ENCODE measurements at regions of chr15 and their contacts with region 1.

Region 1: DNA sequence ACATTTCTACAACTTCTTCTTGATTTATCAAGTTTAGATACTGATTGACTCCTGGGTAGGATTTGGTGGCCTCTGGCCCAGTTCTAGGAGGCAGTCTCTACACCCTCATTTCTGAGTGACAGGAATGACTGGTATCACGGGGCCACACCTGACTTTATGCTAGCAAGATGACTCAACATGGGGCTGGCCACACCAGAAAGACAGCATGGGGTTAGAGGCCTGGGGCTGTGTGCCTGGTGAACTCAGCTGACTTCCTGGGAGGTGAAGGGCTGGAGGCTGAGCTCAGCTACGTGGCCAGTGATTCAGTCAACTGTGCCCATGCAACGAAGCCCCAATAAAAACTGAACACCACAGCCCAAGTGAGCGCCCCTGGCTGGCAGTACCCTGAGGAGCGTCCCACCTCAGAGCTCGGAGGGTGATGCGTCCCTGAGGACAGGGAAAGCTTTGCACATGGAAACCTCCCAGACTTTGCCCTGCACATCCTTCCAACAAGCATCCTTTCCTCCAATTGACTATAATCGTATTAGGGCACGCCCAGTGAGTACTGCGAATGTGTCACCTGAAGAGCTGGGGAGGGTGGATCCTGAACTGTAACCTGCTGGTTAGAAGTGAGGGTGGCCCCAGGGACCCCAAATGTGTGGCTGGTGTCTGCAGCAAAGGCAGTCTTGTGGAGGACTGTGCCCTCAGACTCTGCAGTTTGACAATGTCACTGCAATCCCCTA is 57.2 kb downstream of the NIPA2 start:
- DNase-seq: peak; percentile 76 to 85
- H3K4me3 ChIP-seq: no peak overlapping the region
- H3K4me3 Mint-ChIP-seq: no peak overlapping the region
- H3K27ac Mint-ChIP-seq: peak overlapping the region; percentile 71
- H3K4me1 ChIP-seq: peaks cover 40% of the 10 kb centered on the region
- H3K4me1 Mint-ChIP-seq: peaks cover 36% of the 10 kb centered on the region
- H3K27me3 ChIP-seq: no peaks in the 10 kb centered on the region
- H3K27me3 Mint-ChIP-seq: no peaks in the 10 kb centered on the region
- CTCF ChIP-seq: no peak

Region 2: GRCh38 chr15:22786868-22787698 is 108.5 kb before region 1 on chr15:
- CTCF ChIA-PET with region 1: no interaction called
- POLR2A ChIA-PET with region 1: no interaction called
- intact Hi-C with region 1: loop called (anchors 10 kb)
- DNase-seq: peak in 1 of 2 experiments; percentile 61
- H3K4me3 ChIP-seq: peak overlapping the region; percentile 91
- H3K4me3 Mint-ChIP-seq: peak overlapping the region; percentile 91
- H3K27ac Mint-ChIP-seq: peak overlapping the region; percentile 89
- H3K4me1 ChIP-seq: peaks cover 5% of the 10 kb centered on the region; the same call in 1 of the 2 replicates
- H3K4me1 Mint-ChIP-seq: peaks cover 12% of the 10 kb centered on the region
- H3K27me3 ChIP-seq: no peaks in the 10 kb centered on the region
- H3K27me3 Mint-ChIP-seq: no peaks in the 10 kb centered on the region
- CTCF ChIP-seq: no peak

Region 3: DNA sequence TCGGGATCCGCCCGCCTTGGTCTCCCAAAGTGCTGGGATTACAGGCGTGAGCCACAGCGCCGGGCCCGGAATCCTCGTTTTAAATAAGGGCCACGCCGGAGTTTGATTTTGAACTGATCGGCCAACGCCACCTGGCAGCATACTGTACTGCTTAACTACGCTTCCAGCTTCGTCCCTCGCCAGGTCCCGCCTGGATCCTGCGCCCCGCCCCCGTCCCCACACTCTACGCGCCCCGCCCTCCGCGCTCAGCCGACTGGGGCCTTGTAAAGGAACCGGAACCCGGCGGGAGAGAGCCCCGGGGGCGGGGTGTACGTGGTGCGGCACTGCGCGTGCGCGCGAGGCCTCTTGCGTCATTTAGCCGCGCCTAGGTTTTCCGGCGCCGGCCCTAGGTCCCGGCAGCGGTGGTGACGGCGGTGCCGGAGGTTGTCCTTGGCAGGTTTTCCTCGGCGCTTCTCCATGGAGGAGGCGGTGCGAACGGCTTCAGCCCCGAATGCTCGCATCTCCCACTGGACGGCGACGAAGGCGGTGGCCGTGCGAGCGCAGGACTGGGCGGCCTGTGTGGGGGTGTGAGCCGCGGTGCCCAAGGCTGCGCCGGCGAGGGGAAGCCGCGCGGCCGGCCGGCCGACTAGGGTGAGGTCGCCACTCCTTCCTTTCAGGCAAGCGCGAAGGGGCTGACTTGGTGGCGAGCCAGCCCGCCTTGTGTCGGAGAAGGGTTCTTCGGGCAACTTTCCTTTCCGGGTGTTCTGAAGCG is 57.2 kb before region 1 on chr15 and contains the start of gene NIPA2:
- CTCF ChIA-PET with region 1: no interaction called
- POLR2A ChIA-PET with region 1: interaction called, 10 read pairs
- intact Hi-C with region 1: loop called (anchors 10 kb)
- DNase-seq: peak; percentile 99 to 100
- H3K4me3 ChIP-seq: peak within 1 kb of the TSS; percentile 88
- H3K4me3 Mint-ChIP-seq: peak within 1 kb of the TSS; percentile 86
- H3K27ac Mint-ChIP-seq: peak within 1 kb of the TSS; percentile 94
- H3K4me1 ChIP-seq: peaks cover 8% of the 10 kb centered on the region
- H3K4me1 Mint-ChIP-seq: peaks cover 11% of the 10 kb centered on the region
- H3K27me3 ChIP-seq: no peaks in the 10 kb centered on the region
- H3K27me3 Mint-ChIP-seq: no peaks in the 10 kb centered on the region
- CTCF ChIP-seq: peak in 1 of 2 experiments; percentile 14
- total RNA-seq, gene NIPA2: 85.3 and 89.4 TPM in 2 replicates

Region 4: GRCh38 chr15:22980189-22981050 is 84.8 kb after region 1 on chr15 and contains the start of gene CYFIP1:
- CTCF ChIA-PET with region 1: no interaction called
- POLR2A ChIA-PET with region 1: interaction called, 5 read pairs
- intact Hi-C with region 1: loop called (anchors 1 kb)
- DNase-seq: peak; percentile 90 to 94
- H3K4me3 ChIP-seq: peak within 1 kb of the TSS; percentile 94
- H3K4me3 Mint-ChIP-seq: peak within 1 kb of the TSS; percentile 91
- H3K27ac Mint-ChIP-seq: peak within 1 kb of the TSS; percentile 70
- H3K4me1 ChIP-seq: peaks cover 4% of the 10 kb centered on the region; the same call in 1 of the 2 replicates
- H3K4me1 Mint-ChIP-seq: peaks cover 6% of the 10 kb centered on the region
- H3K27me3 ChIP-seq: no peaks in the 10 kb centered on the region
- H3K27me3 Mint-ChIP-seq: no peaks in the 10 kb centered on the region
- CTCF ChIP-seq: no peak
- total RNA-seq, gene CYFIP1: 205 and 211 TPM in 2 replicates

Region 5: GRCh38 chr15:23039151-23039916 is 143.7 kb after region 1 on chr15 and contains the start of gene TUBGCP5:
- CTCF ChIA-PET with region 1: interaction called, 3 read pairs
- POLR2A ChIA-PET with region 1: no interaction called
- intact Hi-C with region 1: loop called (anchors 5 kb)
- DNase-seq: peak; percentile 99 to 100
- H3K4me3 ChIP-seq: peak within 1 kb of the TSS; percentile 79
- H3K4me3 Mint-ChIP-seq: peak within 1 kb of the TSS; percentile 99
- H3K27ac Mint-ChIP-seq: peak within 1 kb of the TSS; percentile 99
- H3K4me1 ChIP-seq: peaks cover 11% of the 10 kb centered on the region
- H3K4me1 Mint-ChIP-seq: peaks cover 17% of the 10 kb centered on the region
- H3K27me3 ChIP-seq: no peaks in the 10 kb centered on the region
- H3K27me3 Mint-ChIP-seq: no peaks in the 10 kb centered on the region
- CTCF ChIP-seq: peak; percentile 27 to 44
- total RNA-seq, gene TUBGCP5: 48.3 and 53.1 TPM in 2 replicates

Measured in Caco-2 (cell line).